CD4-positive, alpha-beta T cell (primary cell): ENCODE measurements at regions of chr12 and their contacts with region 1.

Region 1: DNA sequence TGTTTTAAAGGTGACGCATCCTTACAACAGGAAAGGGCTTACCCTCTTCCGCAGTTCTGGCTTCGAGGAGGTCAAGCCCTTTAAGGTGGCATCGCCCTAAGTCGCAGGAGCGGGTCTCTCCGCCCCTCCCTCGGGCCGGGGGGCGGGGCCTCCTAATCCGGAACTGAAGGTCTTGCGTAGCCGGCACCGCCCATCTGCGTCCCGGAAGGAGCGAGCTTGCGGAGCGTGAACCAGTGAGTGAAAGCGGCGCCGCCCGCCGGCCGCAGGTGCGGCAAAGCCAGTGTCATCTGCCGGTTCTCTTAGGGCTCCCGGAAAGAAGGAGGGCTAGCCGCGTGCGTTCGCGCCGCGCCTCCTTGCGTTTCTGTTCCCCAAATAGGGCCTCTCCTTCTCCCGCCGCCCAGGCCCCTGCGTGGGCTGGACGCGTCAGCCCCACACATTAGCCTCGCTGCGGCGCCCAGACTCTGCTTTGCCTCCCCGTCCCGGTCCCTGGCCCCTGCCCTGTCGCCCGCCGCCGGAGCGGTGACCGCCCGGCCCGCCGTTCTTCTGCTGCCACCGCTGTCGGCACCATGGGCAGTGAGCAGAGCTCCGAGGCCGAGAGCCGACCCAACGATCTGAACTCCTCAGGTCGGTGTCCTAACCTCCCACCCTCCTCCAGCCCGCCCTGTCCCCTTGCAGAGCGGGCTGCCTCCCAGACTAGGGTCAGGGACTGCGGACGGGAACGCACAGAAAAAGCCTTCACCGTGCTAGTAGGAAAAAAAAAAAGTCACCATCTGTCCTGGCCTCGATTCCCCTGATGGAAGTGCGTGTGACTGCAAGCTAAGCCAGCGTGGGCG is at the start of gene BORCS5:
- DNase-seq: peak; percentile 96 to 99 (median 98)
- ATAC-seq: peak; percentile 85
- H3K4me3 ChIP-seq: peak within 1 kb of the TSS; percentile 87
- H3K4me3 Mint-ChIP-seq: peak within 1 kb of the TSS; percentile 94
- H3K27ac ChIP-seq: peak within 1 kb of the TSS; percentile 86 to 93
- H3K27ac Mint-ChIP-seq: peak within 1 kb of the TSS; percentile 97
- H3K4me1 ChIP-seq: peaks cover 41% of the 10 kb centered on the region
- H3K4me1 Mint-ChIP-seq: peaks cover 64% of the 10 kb centered on the region
- H3K27me3 ChIP-seq: no peaks in the 10 kb centered on the region
- H3K27me3 Mint-ChIP-seq: no peaks in the 10 kb centered on the region
- CTCF ChIP-seq: peak; percentile 30
- total RNA-seq, gene BORCS5: 36.4 to 39.3 TPM

Region 2: DNA sequence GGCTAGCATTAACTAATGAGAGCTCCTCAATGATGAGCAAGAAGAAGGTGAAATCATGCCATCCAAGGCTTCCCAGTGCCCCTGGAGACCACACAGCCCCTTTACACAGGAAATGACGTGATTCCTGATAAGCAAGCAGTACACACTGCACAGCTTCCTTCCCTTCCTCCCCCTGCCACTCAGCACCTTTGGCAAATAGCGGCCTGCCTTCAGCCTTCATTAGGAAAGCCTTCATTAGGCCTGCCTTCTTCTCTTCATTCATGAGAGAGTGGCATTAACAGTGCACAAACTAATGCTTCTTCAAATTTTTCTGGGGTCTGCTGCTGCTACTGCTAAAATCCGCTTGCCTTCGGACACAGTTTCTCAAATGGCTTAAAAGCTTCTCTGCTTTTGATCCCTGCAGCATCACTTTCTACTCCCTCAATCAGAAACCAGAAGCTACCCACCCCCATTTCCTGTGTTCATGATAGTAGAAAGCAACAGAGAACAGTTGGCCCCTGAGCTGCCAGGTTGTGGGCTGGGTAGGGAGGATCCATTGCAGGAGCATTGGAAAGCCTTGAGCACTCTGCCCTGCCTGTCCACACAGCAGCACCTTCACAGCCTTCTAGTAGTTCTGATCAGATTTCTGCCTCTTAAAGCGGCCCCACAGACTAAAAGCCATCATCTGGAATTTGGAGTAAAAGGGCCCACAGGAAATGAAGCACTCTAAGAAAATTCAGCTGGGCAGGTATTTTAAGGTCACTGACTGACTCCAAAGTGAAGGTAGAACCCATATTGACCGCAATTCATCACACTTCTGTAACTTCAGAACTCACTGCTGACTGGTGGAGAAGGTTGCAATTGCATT is 811.4 kb before region 1 on chr12:
- CTCF ChIA-PET with region 1: no interaction called
- POLR2A ChIA-PET with region 1: interaction called, 20 read pairs
- intact Hi-C with region 1: no loop called
- DNase-seq: peak; percentile 21 to 86 (median 40)
- ATAC-seq: peak; percentile 82
- H3K4me3 ChIP-seq: peak overlapping the region; percentile 29
- H3K4me3 Mint-ChIP-seq: peak overlapping the region; percentile 79
- H3K27ac ChIP-seq: peak overlapping the region; percentile 83 to 86
- H3K27ac Mint-ChIP-seq: peak overlapping the region; percentile 93
- H3K4me1 ChIP-seq: peaks cover 58% of the 10 kb centered on the region
- H3K4me1 Mint-ChIP-seq: peaks cover 74% of the 10 kb centered on the region
- H3K27me3 ChIP-seq: no peaks in the 10 kb centered on the region
- H3K27me3 Mint-ChIP-seq: no peaks in the 10 kb centered on the region
- CTCF ChIP-seq: peak; percentile 20

Region 3: DNA sequence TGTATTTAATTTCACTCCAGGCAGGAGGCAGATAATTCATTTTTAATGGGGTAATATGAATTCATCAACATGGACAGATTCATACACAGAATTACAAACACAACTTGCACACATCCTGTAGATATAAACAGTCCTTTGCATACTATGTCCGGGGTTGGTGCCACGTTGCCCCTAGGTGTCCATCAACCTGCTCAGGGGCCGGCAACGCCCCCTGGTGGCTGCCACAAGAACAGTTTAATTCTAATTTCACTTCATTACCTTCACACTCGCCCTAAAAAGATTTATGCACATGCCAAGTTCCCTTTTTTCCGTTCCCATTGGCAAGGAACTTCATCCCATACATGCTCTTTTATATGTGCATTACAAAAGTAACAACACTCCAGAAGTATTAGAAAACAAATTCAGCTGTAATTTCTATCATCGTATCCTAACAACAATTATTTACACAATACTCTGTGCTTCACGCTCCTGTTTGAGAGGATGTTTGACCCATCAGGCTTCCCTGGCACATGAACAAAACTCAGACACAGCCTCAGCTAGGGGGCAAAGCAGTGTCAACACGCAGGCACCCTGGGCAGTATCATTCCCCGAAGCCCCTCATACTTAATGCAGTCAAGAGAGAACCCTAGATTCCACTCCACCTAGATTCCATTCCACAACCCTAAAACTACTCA is 22.6 kb before region 1 on chr12:
- CTCF ChIA-PET with region 1: interaction called, 4 read pairs
- POLR2A ChIA-PET with region 1: interaction called, 12 read pairs
- intact Hi-C with region 1: no loop called
- DNase-seq: peak; percentile 32 to 83 (median 48)
- ATAC-seq: peak; percentile 71
- H3K4me3 ChIP-seq: no peak overlapping the region
- H3K4me3 Mint-ChIP-seq: no peak overlapping the region
- H3K27ac ChIP-seq: no peak overlapping the region
- H3K27ac Mint-ChIP-seq: no peak overlapping the region
- H3K4me1 ChIP-seq: peaks cover 15% of the 10 kb centered on the region
- H3K4me1 Mint-ChIP-seq: peaks cover 28% of the 10 kb centered on the region
- H3K27me3 ChIP-seq: no peaks in the 10 kb centered on the region
- H3K27me3 Mint-ChIP-seq: no peaks in the 10 kb centered on the region
- CTCF ChIP-seq: peak; percentile 96

Region 4: GRCh38 chr12:12467688-12468261 is 110.7 kb after region 1 on chr12:
- CTCF ChIA-PET with region 1: no interaction called
- POLR2A ChIA-PET with region 1: interaction called, 28 read pairs
- intact Hi-C with region 1: no loop called
- DNase-seq: peak in 11 of 14 experiments; percentile 15 to 87 (median 51)
- ATAC-seq: peak; percentile 23
- H3K4me3 ChIP-seq: no peak overlapping the region
- H3K4me3 Mint-ChIP-seq: peak overlapping the region; percentile 40
- H3K27ac ChIP-seq: peak overlapping the region; percentile 78 to 81
- H3K27ac Mint-ChIP-seq: peak overlapping the region; percentile 98
- H3K4me1 ChIP-seq: peaks cover 69% of the 10 kb centered on the region
- H3K4me1 Mint-ChIP-seq: peaks cover 79% of the 10 kb centered on the region
- H3K27me3 ChIP-seq: no peaks in the 10 kb centered on the region
- H3K27me3 Mint-ChIP-seq: no peaks in the 10 kb centered on the region
- CTCF ChIP-seq: no peak

Region 5: GRCh38 chr12:12611512-12612306 is 254.6 kb after region 1 on chr12 and contains the start of gene CREBL2:
- CTCF ChIA-PET with region 1: no interaction called
- POLR2A ChIA-PET with region 1: interaction called, 18 read pairs
- intact Hi-C with region 1: loop called (anchors 5 kb)
- DNase-seq: peak; percentile 76 to 94 (median 83)
- ATAC-seq: peak; percentile 90
- H3K4me3 ChIP-seq: peak within 1 kb of the TSS; percentile 80
- H3K4me3 Mint-ChIP-seq: peak within 1 kb of the TSS; percentile 91
- H3K27ac ChIP-seq: peak within 1 kb of the TSS; percentile 92 to 97
- H3K27ac Mint-ChIP-seq: peak within 1 kb of the TSS; percentile 98
- H3K4me1 ChIP-seq: peaks cover 49% of the 10 kb centered on the region
- H3K4me1 Mint-ChIP-seq: peaks cover 71% of the 10 kb centered on the region
- H3K27me3 ChIP-seq: no peaks in the 10 kb centered on the region
- H3K27me3 Mint-ChIP-seq: no peaks in the 10 kb centered on the region
- CTCF ChIP-seq: no peak
- total RNA-seq, gene CREBL2: 9.5 to 12.6 TPM

Region 6: DNA sequence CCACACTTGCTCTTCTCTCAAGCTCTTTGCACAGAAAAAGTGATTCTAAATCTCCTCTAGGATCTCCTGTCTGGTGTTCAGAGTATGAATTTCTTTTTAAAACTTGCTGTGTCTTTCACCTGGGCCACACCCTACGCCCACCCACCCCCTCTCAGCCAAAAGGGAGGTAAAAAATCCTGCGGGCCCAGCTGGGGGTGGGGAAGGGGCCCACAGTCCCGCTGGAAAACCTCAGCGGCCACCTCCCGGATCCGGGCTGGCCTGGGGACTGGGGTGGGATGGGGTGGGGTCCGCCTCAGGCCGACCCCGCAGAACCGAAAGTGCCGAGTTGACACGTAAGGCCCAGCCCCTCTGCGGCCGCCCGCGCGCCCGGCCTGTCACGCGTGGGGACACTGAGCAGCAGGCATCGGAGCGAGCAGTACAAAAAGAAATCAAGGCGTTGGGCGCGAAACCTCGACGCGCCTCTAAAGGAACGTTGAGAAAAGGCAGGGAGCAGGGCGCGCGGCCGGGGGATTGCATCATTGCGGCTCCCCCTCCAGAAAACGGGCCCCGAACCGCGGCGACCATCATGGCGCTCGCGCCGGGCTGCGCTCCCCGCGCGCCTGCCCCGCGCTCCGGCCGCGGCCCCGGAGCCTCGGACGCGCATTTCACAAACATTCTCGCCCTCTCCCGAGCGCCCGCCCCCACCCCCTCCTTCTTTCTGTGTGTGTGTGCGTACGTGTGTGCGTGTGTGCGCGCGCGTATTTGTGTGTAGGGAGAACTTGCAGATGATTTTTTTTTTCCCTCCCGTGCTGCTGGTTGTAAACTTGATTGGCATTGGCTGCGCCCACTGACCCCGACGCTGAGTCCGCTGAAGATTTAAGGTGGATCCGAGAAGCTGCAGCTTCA is 367.8 kb after region 1 on chr12:
- CTCF ChIA-PET with region 1: interaction called, 5 read pairs
- POLR2A ChIA-PET with region 1: interaction called, 175 read pairs
- intact Hi-C with region 1: loop called (anchors 2 to 5 kb)
- DNase-seq: peak in 11 of 14 experiments; percentile 72 to 98 (median 84)
- ATAC-seq: peak; percentile 56
- H3K4me3 ChIP-seq: peak overlapping the region; percentile 97
- H3K4me3 Mint-ChIP-seq: peak overlapping the region; percentile 98
- H3K27ac ChIP-seq: peak overlapping the region; percentile 89 to 91
- H3K27ac Mint-ChIP-seq: peak overlapping the region; percentile 95
- H3K4me1 ChIP-seq: peaks cover 37% of the 10 kb centered on the region
- H3K4me1 Mint-ChIP-seq: peaks cover 63% of the 10 kb centered on the region
- H3K27me3 ChIP-seq: no peaks in the 10 kb centered on the region
- H3K27me3 Mint-ChIP-seq: peaks cover 8% of the 10 kb centered on the region
- CTCF ChIP-seq: no peak

Region 7: GRCh38 chr12:12872139-12872881 is 515.2 kb after region 1 on chr12:
- CTCF ChIA-PET with region 1: no interaction called
- POLR2A ChIA-PET with region 1: no interaction called
- intact Hi-C with region 1: no loop called
- DNase-seq: no peak
- ATAC-seq: no peak
- H3K4me3 ChIP-seq: no peak overlapping the region
- H3K4me3 Mint-ChIP-seq: no peak overlapping the region
- H3K27ac ChIP-seq: no peak overlapping the region
- H3K27ac Mint-ChIP-seq: no peak overlapping the region
- H3K4me1 ChIP-seq: no peaks in the 10 kb centered on the region
- H3K4me1 Mint-ChIP-seq: no peaks in the 10 kb centered on the region
- H3K27me3 ChIP-seq: no peaks in the 10 kb centered on the region
- H3K27me3 Mint-ChIP-seq: no peaks in the 10 kb centered on the region
- CTCF ChIP-seq: no peak

Region 8: DNA sequence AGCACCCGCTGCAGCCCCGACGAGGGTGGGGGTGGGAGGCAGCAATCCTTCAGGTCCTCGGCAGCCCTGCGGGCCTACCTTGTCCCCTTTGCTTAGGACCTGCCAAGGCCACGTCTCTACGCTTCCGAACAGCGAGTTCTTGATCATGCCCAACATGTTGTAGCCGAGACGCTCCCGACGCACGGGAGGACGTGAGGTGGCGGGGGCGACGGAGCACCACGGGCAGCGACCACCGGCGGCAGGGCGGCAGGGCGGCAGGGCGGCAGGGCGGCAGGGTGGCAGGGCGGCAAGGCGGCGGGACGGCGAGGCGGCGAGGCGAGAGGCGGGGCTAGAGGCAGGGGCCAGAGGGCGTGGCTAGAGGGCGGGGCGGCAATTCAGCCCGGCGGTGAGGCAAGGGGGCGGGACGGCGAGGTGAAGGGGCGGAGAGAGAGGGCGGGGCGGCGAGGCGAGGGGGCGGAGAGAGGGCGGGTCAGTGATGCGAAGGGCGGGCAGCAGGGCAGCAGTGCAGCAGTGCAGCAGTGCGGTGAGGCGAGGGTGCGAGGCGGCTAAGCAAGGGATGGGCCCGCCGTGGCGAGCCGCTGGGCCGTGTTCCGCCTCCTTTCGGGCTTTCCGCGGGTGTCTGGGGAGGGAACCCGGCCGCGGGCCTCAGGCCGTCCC is 643.0 kb after region 1 on chr12 and contains the start of gene HEBP1:
- CTCF ChIA-PET with region 1: no interaction called
- POLR2A ChIA-PET with region 1: no interaction called
- intact Hi-C with region 1: loop called in 1 of 2 experiments (anchors 5 kb)
- DNase-seq: peak; percentile 92 to 98 (median 96)
- ATAC-seq: peak; percentile 87
- H3K4me3 ChIP-seq: peak within 1 kb of the TSS; percentile 95
- H3K4me3 Mint-ChIP-seq: peak within 1 kb of the TSS; percentile 93
- H3K27ac ChIP-seq: peak within 1 kb of the TSS; percentile 32 to 45
- H3K27ac Mint-ChIP-seq: peak within 1 kb of the TSS; percentile 89
- H3K4me1 ChIP-seq: peaks cover 29% of the 10 kb centered on the region
- H3K4me1 Mint-ChIP-seq: peaks cover 42% of the 10 kb centered on the region
- H3K27me3 ChIP-seq: peaks cover 0 to 3% of the 10 kb centered on the region in 2 experiments
- H3K27me3 Mint-ChIP-seq: no peaks in the 10 kb centered on the region
- CTCF ChIP-seq: no peak
- total RNA-seq, gene HEBP1: 11.9 to 12.5 TPM